Common myeloid progenitor, CD34-positive (primary cell): ENCODE measurements at regions of chr17 and their contacts with region 1.

Region 1: GRCh38 chr17:49290690-49291359 is 60.2 kb upstream of the PHOSPHO1 start:
- DNase-seq: peak; percentile 28 to 56 (median 39)
- H3K4me3 ChIP-seq: no peak overlapping the region
- H3K27ac ChIP-seq: no peak overlapping the region
- H3K4me1 ChIP-seq: no peaks in the 10 kb centered on the region
- H3K27me3 ChIP-seq: no peaks in the 10 kb centered on the region

Region 2: GRCh38 chr17:49180303-49180702 is 110.5 kb before region 1 on chr17:
- CTCF ChIA-PET with region 1: interaction called, 24 read pairs
- POLR2A ChIA-PET with region 1: no interaction called
- DNase-seq: peak; percentile 55 to 62 (median 60)
- H3K4me3 ChIP-seq: no peak overlapping the region
- H3K27ac ChIP-seq: no peak overlapping the region
- H3K4me1 ChIP-seq: peaks cover 0 to 10% (median 0%) of the 10 kb centered on the region in 4 experiments
- H3K27me3 ChIP-seq: no peaks in the 10 kb centered on the region

Region 3: GRCh38 chr17:49217651-49218413 is 73.0 kb before region 1 on chr17:
- CTCF ChIA-PET with region 1: interaction called, 13 read pairs
- POLR2A ChIA-PET with region 1: no interaction called
- DNase-seq: peak; percentile 85 to 92 (median 91)
- H3K4me3 ChIP-seq: peak overlapping the region in 4 of 7 experiments; percentile 4 to 55 (median 23)
- H3K27ac ChIP-seq: no peak overlapping the region
- H3K4me1 ChIP-seq: peaks cover 5 to 75% (median 36%) of the 10 kb centered on the region in 4 experiments
- H3K27me3 ChIP-seq: peaks cover 0 to 5% (median under 1%) of the 10 kb centered on the region in 5 experiments

Region 4: DNA sequence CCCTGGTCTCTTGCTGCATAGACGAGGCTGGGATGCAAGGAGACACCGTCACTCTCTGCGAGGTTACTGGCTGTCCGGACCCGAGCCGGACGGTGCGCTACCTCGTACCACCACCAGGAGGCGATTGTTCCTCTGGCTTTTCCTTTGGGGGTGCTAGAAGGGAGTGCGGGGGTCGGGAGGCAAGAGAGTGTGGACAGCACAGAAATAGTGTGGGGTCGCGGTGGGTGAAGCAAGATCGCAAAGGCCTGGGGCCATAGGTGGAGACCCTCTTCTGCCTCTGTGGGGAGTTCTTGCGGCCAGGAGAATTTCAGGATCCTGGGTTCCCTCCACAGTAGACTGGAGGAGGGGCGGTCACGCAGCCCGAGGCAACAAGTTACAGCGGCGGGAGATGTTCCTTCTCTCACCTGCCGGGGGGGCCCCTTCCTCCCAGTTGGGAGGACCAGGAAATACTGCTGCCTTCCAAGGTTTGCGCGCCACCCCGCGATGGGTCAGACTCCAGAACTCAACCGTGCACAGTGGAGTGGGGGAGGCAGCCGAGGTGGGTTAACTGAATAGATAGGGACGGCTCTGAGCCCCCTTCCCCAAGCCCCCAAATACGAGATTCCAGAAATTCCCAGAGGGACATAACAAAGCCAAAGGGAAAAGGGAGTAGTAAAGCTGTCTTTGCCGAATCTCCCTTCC is 67.2 kb before region 1 on chr17:
- CTCF ChIA-PET with region 1: interaction called, 13 read pairs
- POLR2A ChIA-PET with region 1: no interaction called
- DNase-seq: peak in 2 of 3 donors; percentile 50 to 59
- H3K4me3 ChIP-seq: peak overlapping the region in 5 of 7 experiments; percentile 19 to 63 (median 51)
- H3K27ac ChIP-seq: no peak overlapping the region
- H3K4me1 ChIP-seq: peaks cover 0 to 39% (median 31%) of the 10 kb centered on the region in 4 experiments
- H3K27me3 ChIP-seq: peaks cover 0 to 55% (median 12%) of the 10 kb centered on the region in 5 experiments